IMR-90 (cell line): ENCODE measurements at regions of chr7 and their contacts with region 1.

Region 1: DNA sequence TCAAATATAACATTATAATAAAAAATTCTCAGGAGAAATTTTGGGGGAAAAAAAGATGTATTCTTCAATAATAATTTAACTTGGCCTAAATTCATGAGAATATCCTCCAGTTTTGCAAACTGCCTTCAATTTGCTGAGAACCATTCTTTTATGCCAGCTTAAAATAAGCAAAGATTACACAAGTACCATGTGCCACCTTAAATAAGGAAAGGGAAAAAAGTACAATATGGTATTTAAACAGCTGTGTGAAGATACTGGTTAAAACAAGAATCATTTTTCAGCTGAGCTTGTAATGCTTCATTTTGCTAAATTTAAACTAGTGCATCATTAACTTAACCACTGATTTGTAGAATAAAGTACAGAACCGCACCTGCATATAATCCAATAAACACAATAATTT is 217.8 kb downstream of the LRRN3 start:
- DNase-seq: no peak
- ATAC-seq: no peak
- H3K4me3 ChIP-seq: no peak overlapping the region
- H3K27ac ChIP-seq: no peak overlapping the region
- H3K4me1 ChIP-seq: no peaks in the 10 kb centered on the region
- H3K27me3 ChIP-seq: no peaks in the 10 kb centered on the region
- CTCF ChIP-seq: no peak
- POLR2A ChIP-seq: no peak
- RAD21 ChIP-seq: no peak

Region 2: DNA sequence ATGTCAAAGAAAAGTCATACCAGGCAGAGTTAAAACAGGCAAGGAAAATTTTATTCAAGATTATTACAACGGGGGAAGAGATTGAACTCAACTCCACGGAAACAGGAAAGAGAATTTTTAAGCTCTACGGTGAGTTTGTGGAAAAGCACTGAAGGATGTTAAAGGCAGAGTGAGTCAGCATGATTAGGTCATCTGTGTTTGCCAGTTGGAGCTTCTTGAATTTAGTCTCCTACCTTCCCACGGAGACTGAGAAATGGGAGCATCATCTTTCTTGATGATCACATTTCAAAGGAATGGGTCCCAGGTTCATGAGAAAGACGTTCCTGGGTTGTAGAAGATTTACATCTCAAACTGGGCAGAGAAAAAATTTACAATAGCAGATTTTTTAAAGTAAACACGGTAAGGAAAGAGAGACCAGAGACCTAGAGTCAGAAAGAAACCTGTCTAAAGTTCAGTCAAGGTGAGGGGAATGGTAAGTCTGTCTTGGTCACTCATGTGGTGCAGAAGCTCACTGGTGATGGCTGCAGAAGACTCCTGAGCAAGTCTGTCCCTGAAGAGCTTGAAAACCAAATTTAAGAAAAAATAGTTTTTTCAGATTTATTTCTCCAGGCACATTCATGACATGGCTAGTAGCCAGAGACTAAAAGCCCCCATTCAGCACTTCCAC is 734.7 kb before region 1 on chr7:
- CTCF ChIA-PET with region 1: no interaction called
- POLR2A ChIA-PET with region 1: no interaction called
- dilution Hi-C with region 1: no loop called
- in situ Hi-C with region 1: no loop called
- intact Hi-C with region 1: no loop called
- DNase-seq: peak; percentile 99
- ATAC-seq: peak; percentile 85
- H3K4me3 ChIP-seq: no peak overlapping the region
- H3K27ac ChIP-seq: peak overlapping the region; percentile 95
- H3K4me1 ChIP-seq: peaks cover 11% of the 10 kb centered on the region
- H3K27me3 ChIP-seq: no peaks in the 10 kb centered on the region
- CTCF ChIP-seq: no peak
- POLR2A ChIP-seq: peak; percentile 32; the same call in 1 of the 2 replicates
- RAD21 ChIP-seq: no peak

Region 3: DNA sequence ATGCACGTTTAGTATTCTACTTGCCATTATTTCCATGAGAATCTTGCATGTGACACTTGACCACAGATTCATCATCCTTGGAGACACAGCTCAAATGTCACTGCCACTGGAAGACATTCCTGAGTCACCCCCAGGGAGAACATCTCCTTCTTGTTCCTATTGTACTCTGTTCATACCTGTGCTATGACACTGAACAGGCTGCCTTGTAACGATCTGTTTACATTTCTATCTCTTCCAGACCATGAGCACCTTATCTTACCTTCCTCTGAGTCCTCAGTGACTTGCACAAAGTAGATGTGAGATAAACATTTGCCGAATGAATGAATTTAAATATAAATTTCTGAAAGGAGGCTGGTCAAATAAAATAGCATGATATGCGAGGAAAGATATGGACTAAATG is 549.6 kb before region 1 on chr7:
- CTCF ChIA-PET with region 1: no interaction called
- POLR2A ChIA-PET with region 1: no interaction called
- dilution Hi-C with region 1: no loop called
- in situ Hi-C with region 1: no loop called
- intact Hi-C with region 1: loop called (anchors 5 kb)
- DNase-seq: no peak
- ATAC-seq: no peak
- H3K4me3 ChIP-seq: no peak overlapping the region
- H3K27ac ChIP-seq: no peak overlapping the region
- H3K4me1 ChIP-seq: no peaks in the 10 kb centered on the region
- H3K27me3 ChIP-seq: no peaks in the 10 kb centered on the region
- CTCF ChIP-seq: no peak
- POLR2A ChIP-seq: no peak
- RAD21 ChIP-seq: no peak

Region 4: GRCh38 chr7:111029574-111030251 is 279.0 kb before region 1 on chr7:
- CTCF ChIA-PET with region 1: no interaction called
- POLR2A ChIA-PET with region 1: no interaction called
- dilution Hi-C with region 1: no loop called
- in situ Hi-C with region 1: no loop called
- intact Hi-C with region 1: no loop called
- DNase-seq: peak; percentile 17
- ATAC-seq: no peak
- H3K4me3 ChIP-seq: no peak overlapping the region
- H3K27ac ChIP-seq: no peak overlapping the region
- H3K4me1 ChIP-seq: peaks cover 2% of the 10 kb centered on the region; the same call in 1 of the 2 replicates
- H3K27me3 ChIP-seq: no peaks in the 10 kb centered on the region
- CTCF ChIP-seq: no peak
- POLR2A ChIP-seq: no peak
- RAD21 ChIP-seq: no peak

Region 5: GRCh38 chr7:111274857-111275256 is 33.8 kb before region 1 on chr7:
- CTCF ChIA-PET with region 1: no interaction called
- POLR2A ChIA-PET with region 1: no interaction called
- dilution Hi-C with region 1: no loop called
- in situ Hi-C with region 1: no loop called
- intact Hi-C with region 1: no loop called
- DNase-seq: peak; percentile 43
- ATAC-seq: peak; percentile 40; the same call in 1 of the 2 replicates
- H3K4me3 ChIP-seq: no peak overlapping the region
- H3K27ac ChIP-seq: no peak overlapping the region
- H3K4me1 ChIP-seq: no peaks in the 10 kb centered on the region
- H3K27me3 ChIP-seq: no peaks in the 10 kb centered on the region
- CTCF ChIP-seq: no peak
- POLR2A ChIP-seq: no peak
- RAD21 ChIP-seq: no peak